ENCODE measurements at regions of chr2 and their contacts with region 1.

Region 1: GRCh38 chr2:144607891-144608521 is 88.1 kb upstream of the ZEB2 start:
- DNase-seq: no peak
- ATAC-seq: peak; percentile 36
- H3K4me3 ChIP-seq: no peak overlapping the region
- H3K4me3 Mint-ChIP-seq: peak overlapping the region; percentile 23
- H3K27ac ChIP-seq: no peak overlapping the region
- H3K27ac Mint-ChIP-seq: peak overlapping the region; percentile 55
- H3K4me1 ChIP-seq: peaks cover 11 to 25% of the 10 kb centered on the region in 2 donors
- H3K4me1 Mint-ChIP-seq: peaks cover 42% of the 10 kb centered on the region
- H3K27me3 ChIP-seq: no peaks in the 10 kb centered on the region
- H3K27me3 Mint-ChIP-seq: no peaks in the 10 kb centered on the region
- CTCF ChIP-seq: no peak

Region 2: GRCh38 chr2:144560251-144560650 is 47.8 kb before region 1 on chr2:
- CTCF ChIA-PET with region 1: no interaction called
- POLR2A ChIA-PET with region 1: no interaction called
- intact Hi-C with region 1: loop called (anchors 5 kb)
- DNase-seq: no peak
- ATAC-seq: no peak
- H3K4me3 ChIP-seq: no peak overlapping the region
- H3K4me3 Mint-ChIP-seq: no peak overlapping the region
- H3K27ac ChIP-seq: no peak overlapping the region
- H3K27ac Mint-ChIP-seq: no peak overlapping the region
- H3K4me1 ChIP-seq: peaks cover 0 to 7% of the 10 kb centered on the region in 2 donors
- H3K4me1 Mint-ChIP-seq: peaks cover 15% of the 10 kb centered on the region
- H3K27me3 ChIP-seq: peaks cover 0 to 5% (median 0%) of the 10 kb centered on the region in 4 experiments
- H3K27me3 Mint-ChIP-seq: no peaks in the 10 kb centered on the region
- CTCF ChIP-seq: no peak